ENCODE measurements at regions of chr11 and their contacts with region 1.

Region 1: DNA sequence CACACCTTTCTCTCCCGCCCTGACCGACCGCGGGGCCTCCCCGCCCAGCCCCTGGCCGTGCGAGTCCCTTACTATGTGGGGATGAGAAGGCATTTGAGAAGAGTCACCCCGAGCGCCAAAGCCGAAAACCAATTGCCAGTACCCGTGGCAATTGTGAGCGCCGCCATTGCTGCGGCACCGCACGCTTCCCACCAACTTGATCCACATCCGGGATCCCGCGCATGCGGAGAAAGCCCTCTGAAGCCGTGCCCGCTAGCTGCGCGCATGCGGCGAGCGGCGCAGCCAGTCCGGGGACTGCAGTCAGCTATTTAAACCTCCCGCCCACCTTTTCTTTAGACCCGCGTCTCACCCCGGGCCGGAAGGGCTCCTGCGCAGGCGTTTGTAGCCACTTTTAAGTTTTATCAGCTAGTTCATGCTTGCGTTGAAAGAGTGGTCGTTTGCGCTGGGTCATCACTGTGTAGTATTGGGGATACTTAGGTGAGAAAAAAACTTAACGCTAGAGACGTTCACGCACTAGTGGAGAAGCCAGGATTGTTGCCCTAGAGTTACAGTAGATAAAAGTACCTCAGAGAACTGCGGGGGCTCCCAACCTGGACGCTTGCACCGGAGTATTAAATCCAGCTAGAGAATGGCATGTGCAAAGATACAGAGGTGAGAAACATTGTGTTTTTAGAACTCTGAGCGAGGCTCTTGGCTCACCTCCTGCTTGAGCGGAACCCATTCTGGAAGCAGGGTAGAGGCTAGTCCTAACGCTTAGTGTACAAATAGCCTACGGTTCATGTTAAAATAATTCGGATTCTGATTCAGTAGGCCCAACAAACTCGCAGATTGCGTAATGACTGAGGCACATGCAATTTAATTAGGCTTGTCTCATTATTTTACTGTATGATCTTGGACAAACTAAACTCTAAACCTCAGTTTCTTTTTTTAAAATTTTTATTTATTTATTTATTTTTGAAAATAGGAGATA is at the start of gene ALG8:
- DNase-seq: peak; percentile 96 to 99 (median 97)
- ATAC-seq: peak; percentile 95
- H3K4me3 ChIP-seq: peak within 1 kb of the TSS; percentile 92
- H3K4me3 Mint-ChIP-seq: peak within 1 kb of the TSS; percentile 95
- H3K27ac ChIP-seq: peak within 1 kb of the TSS; percentile 74 to 90
- H3K27ac Mint-ChIP-seq: peak within 1 kb of the TSS; percentile 97
- H3K4me1 ChIP-seq: peaks cover 19% of the 10 kb centered on the region
- H3K4me1 Mint-ChIP-seq: peaks cover 35% of the 10 kb centered on the region
- H3K27me3 ChIP-seq: no peaks in the 10 kb centered on the region
- H3K27me3 Mint-ChIP-seq: no peaks in the 10 kb centered on the region
- CTCF ChIP-seq: no peak
- total RNA-seq, gene ALG8: 14.2 to 17.5 TPM

Region 2: DNA sequence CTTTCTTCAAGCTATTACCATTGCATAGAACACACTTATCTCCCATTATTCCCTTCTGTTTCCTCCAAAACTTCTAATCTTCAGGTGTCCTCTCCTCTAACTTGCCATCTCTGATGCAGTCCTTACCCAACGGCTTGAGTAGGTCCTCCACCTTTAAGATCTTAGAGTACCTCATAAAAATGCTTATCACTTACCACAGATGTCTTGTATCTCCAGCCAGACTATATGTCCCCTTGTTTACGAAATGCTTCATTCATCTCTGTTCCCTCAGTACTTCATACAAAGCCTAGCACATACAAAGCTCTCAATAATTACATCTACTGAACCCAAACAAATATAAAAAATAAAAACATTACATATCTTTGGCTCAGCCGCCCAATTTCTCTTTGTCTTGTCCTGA is 715.1 kb before region 1 on chr11:
- CTCF ChIA-PET with region 1: no interaction called
- POLR2A ChIA-PET with region 1: no interaction called
- intact Hi-C with region 1: no loop called
- DNase-seq: no peak
- ATAC-seq: no peak
- H3K4me3 ChIP-seq: no peak overlapping the region
- H3K4me3 Mint-ChIP-seq: no peak overlapping the region
- H3K27ac ChIP-seq: no peak overlapping the region
- H3K27ac Mint-ChIP-seq: no peak overlapping the region
- H3K4me1 ChIP-seq: no peaks in the 10 kb centered on the region
- H3K4me1 Mint-ChIP-seq: no peaks in the 10 kb centered on the region
- H3K27me3 ChIP-seq: no peaks in the 10 kb centered on the region
- H3K27me3 Mint-ChIP-seq: peaks cover 8% of the 10 kb centered on the region
- CTCF ChIP-seq: no peak

Region 3: DNA sequence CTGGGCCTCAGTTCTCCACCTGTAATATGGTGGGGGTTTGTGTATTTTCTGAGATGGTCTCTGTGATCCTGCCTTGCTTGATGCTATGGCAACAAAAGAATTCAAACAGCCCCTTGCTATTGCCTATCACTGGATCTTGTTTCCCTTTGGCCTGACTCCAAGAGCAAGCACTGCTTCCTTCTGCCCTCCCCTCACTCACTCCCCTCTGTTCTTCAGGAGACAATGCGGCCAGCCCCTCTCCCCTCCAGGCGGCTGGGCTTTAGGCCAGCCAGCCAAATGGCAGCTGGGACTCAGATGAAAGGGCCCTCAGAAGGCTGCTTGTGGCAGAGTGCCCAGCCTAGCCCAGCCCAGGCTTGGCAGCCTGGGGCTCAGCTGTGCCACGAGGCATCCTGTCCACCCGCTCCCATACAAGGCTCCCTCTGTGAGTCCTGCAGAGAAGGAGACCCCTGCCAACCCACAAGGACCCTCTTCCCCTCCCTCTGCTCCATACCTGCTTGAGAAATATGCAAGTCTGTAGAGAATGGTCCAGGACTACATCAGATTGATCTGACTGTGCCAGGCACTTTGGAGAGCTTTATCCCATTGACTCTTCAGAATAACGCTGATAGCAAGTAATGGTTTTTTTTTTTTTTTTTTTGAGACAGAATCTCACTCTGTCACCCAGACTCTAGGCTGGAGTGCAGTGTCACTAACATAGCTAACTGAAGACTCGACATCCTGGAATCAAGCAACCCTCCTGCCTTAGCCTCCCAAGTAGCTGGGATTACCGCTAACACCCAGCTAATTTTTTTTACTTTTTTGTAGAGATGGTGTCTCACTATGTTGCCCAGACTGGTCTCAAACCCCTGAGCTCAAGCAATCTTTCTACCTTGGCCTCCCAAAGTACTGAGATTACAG is 109.0 kb before region 1 on chr11:
- CTCF ChIA-PET with region 1: no interaction called
- POLR2A ChIA-PET with region 1: no interaction called
- intact Hi-C with region 1: no loop called
- DNase-seq: no peak
- ATAC-seq: no peak
- H3K4me3 ChIP-seq: no peak overlapping the region
- H3K4me3 Mint-ChIP-seq: no peak overlapping the region
- H3K27ac ChIP-seq: no peak overlapping the region
- H3K27ac Mint-ChIP-seq: no peak overlapping the region
- H3K4me1 ChIP-seq: no peaks in the 10 kb centered on the region
- H3K4me1 Mint-ChIP-seq: no peaks in the 10 kb centered on the region
- H3K27me3 ChIP-seq: no peaks in the 10 kb centered on the region
- H3K27me3 Mint-ChIP-seq: no peaks in the 10 kb centered on the region
- CTCF ChIP-seq: no peak

Region 4: GRCh38 chr11:78079232-78080083 is 60.2 kb before region 1 on chr11 and contains the start of gene NDUFC2:
- CTCF ChIA-PET with region 1: no interaction called
- POLR2A ChIA-PET with region 1: interaction called, 3 read pairs
- intact Hi-C with region 1: loop called (anchors 1 kb)
- DNase-seq: peak; percentile 30 to 83 (median 66)
- ATAC-seq: peak; percentile 82
- H3K4me3 ChIP-seq: peak within 1 kb of the TSS; percentile 74 to 97
- H3K4me3 Mint-ChIP-seq: peak within 1 kb of the TSS; percentile 96
- H3K27ac ChIP-seq: peak within 1 kb of the TSS; percentile 76 to 78
- H3K27ac Mint-ChIP-seq: peak within 1 kb of the TSS; percentile 96
- H3K4me1 ChIP-seq: peaks cover 56% of the 10 kb centered on the region
- H3K4me1 Mint-ChIP-seq: peaks cover 63% of the 10 kb centered on the region
- H3K27me3 ChIP-seq: no peaks in the 10 kb centered on the region
- H3K27me3 Mint-ChIP-seq: no peaks in the 10 kb centered on the region
- CTCF ChIP-seq: no peak
- total RNA-seq, gene NDUFC2: 72.2 to 76.3 TPM

Region 5: DNA sequence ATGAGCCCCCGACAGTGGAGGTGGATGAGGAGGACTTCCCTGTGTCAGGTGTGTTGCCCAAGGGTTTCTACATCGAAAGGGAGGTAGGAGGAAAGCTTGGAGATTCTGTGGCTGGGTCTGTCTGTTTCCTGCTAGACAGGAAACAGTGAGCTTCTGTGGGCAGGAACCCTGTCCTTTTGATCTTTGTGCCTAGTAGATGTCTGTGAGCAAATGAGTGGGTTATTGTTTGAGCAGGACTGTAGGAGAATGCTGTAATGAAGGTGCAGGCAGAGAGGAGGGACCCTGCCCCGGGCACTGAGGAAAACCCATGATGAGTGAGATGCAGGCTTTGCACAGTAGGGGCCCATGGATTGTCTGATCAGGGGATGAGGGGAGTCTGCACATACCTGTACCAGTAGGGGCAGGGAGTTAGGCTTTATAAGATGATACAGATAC is 63.0 kb after region 1 on chr11:
- CTCF ChIA-PET with region 1: no interaction called
- POLR2A ChIA-PET with region 1: interaction called, 8 read pairs
- intact Hi-C with region 1: loop called (anchors 1 to 2 kb)
- DNase-seq: peak; percentile 31 to 90 (median 69)
- ATAC-seq: peak; percentile 79
- H3K4me3 ChIP-seq: peak overlapping the region; percentile 28 to 56
- H3K4me3 Mint-ChIP-seq: peak overlapping the region; percentile 82
- H3K27ac ChIP-seq: peak overlapping the region; percentile 67 to 89
- H3K27ac Mint-ChIP-seq: peak overlapping the region; percentile 98
- H3K4me1 ChIP-seq: peaks cover 28% of the 10 kb centered on the region
- H3K4me1 Mint-ChIP-seq: peaks cover 47% of the 10 kb centered on the region
- H3K27me3 ChIP-seq: no peaks in the 10 kb centered on the region
- H3K27me3 Mint-ChIP-seq: no peaks in the 10 kb centered on the region
- CTCF ChIP-seq: no peak

Region 6: DNA sequence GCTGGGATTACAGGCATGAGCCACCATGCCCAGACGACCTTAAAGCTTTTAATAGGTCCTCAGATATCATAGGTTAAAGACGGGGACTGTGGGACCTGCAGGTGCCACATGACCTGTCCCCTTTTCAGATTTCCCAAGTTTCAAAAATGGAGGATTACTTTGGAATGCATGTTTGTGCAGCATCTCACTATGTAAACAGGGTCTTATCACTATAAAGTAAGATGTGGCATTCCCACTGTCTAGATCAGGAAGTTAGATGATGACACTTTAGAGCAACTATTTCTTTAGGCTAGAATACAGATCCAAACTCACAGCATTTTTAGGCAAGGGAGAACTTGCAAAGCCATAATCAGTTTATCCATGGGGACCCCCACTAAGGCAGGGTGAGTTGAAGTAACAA is 141.8 kb after region 1 on chr11:
- CTCF ChIA-PET with region 1: no interaction called
- POLR2A ChIA-PET with region 1: no interaction called
- intact Hi-C with region 1: no loop called
- DNase-seq: no peak
- ATAC-seq: no peak
- H3K4me3 ChIP-seq: no peak overlapping the region
- H3K4me3 Mint-ChIP-seq: no peak overlapping the region
- H3K27ac ChIP-seq: no peak overlapping the region
- H3K27ac Mint-ChIP-seq: no peak overlapping the region
- H3K4me1 ChIP-seq: no peaks in the 10 kb centered on the region
- H3K4me1 Mint-ChIP-seq: peaks cover 2% of the 10 kb centered on the region
- H3K27me3 ChIP-seq: no peaks in the 10 kb centered on the region
- H3K27me3 Mint-ChIP-seq: peaks cover 2% of the 10 kb centered on the region
- CTCF ChIP-seq: no peak

Region 7: DNA sequence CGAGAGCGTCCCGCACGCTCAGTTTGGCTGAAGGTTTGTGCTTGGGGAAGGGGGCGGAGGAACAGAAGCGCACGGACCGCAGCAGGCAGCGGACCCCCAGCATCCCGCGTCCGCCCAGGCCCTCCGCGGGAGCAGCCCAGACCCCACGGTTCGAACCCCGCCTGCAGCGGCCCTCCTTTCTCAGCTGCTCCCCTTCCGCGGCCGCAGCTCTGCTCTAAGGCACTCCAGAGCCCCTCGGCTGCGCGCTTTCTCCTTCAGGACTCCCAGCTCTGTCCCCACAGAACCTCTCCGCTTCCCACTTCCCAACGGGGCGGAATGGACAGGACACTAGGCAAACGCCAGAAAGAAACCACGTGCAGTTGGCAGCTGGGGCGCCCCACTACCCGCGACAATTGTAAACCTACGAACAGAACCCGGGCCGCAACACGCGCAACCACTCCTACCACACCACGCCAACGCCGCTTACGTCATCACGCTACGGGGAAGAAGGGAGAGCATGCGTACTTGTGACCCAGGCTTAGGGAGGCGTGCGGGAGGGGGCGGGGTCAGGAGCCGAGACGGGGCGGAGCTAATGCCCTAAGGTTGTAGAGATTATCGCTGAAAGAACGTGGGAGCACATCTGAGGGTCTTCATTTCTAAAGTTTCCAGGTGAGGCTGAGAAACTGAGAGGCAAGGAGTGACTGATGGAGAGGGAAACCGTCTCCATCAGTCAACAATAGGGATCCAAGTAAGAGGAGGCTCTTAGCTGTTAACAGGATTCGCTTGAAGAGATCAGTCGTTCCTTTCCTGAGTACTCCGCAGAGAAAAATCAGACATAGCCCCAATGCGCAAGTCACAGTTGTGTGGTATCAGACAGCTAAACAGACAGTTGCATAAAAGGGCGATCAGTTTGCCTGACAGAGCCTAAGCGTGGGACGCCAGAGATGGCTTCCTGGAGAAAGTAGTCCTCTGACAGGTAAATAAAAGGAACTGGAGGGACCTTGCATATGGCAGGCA is 435.0 kb after region 1 on chr11 and contains the start of gene NARS2:
- CTCF ChIA-PET with region 1: no interaction called
- POLR2A ChIA-PET with region 1: interaction called, 10 read pairs
- intact Hi-C with region 1: loop called (anchors 1 to 2 kb)
- DNase-seq: peak; percentile 94 to 99 (median 98)
- ATAC-seq: peak; percentile 98
- H3K4me3 ChIP-seq: peak within 1 kb of the TSS; percentile 73 to 95
- H3K4me3 Mint-ChIP-seq: peak within 1 kb of the TSS; percentile 94
- H3K27ac ChIP-seq: peak within 1 kb of the TSS; percentile 77 to 88
- H3K27ac Mint-ChIP-seq: peak within 1 kb of the TSS; percentile 99
- H3K4me1 ChIP-seq: peaks cover 16% of the 10 kb centered on the region
- H3K4me1 Mint-ChIP-seq: peaks cover 39% of the 10 kb centered on the region
- H3K27me3 ChIP-seq: no peaks in the 10 kb centered on the region
- H3K27me3 Mint-ChIP-seq: peaks cover 4% of the 10 kb centered on the region
- CTCF ChIP-seq: no peak
- total RNA-seq, gene NARS2: 6.3 to 8.3 TPM